ENCODE measurements at regions of chr17 and their contacts with region 1.

Region 1: DNA sequence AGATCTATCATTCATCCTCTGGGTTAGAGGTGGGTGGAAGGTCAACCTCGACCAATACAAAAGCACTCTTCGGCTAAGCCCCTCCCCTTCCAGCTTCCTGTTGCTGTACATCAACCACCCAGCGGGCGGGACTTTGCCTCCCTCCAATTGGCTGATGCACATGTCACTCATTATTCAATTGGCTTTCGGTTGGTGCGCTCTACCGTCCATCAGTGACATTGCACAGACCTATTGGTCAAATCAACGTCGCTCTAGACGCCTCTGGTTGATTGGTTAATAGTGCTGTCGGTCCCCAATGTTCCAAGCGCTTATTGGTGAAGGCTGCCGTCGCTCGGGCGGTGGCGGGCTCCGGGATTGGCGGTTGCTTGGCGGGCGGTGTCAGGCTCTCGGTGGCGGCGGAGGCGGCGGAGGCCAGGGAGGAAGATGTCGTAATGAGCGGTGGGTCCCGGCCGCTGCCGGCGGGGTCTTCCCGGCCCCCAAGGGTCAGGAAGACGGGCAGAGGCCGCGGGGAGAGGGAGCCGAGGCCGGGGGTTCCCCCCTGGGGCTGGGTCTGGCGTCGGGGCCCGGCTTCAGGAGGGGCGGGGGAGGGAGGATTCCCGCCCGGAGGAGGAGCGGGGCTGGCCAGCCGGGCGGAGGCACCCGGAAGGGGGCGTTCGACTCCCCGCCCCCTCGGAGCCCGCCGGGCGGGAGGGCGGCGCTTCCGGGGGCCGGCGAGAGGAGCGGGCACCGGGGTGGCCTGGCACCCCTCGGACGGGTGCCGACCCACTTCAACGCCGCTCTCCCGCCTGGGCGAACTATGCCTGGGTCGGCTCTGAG is at the start of gene SP2:
- DNase-seq: peak; percentile 100
- ATAC-seq: peak; percentile 90
- H3K4me3 ChIP-seq: peak within 1 kb of the TSS; percentile 78
- H3K27ac ChIP-seq: peak within 1 kb of the TSS; percentile 77
- H3K4me1 ChIP-seq: peaks cover 30% of the 10 kb centered on the region
- H3K27me3 ChIP-seq: no peaks in the 10 kb centered on the region
- CTCF ChIP-seq: no peak
- total RNA-seq, gene SP2: 3.9 and 6.5 TPM in 2 replicates

Region 2: DNA sequence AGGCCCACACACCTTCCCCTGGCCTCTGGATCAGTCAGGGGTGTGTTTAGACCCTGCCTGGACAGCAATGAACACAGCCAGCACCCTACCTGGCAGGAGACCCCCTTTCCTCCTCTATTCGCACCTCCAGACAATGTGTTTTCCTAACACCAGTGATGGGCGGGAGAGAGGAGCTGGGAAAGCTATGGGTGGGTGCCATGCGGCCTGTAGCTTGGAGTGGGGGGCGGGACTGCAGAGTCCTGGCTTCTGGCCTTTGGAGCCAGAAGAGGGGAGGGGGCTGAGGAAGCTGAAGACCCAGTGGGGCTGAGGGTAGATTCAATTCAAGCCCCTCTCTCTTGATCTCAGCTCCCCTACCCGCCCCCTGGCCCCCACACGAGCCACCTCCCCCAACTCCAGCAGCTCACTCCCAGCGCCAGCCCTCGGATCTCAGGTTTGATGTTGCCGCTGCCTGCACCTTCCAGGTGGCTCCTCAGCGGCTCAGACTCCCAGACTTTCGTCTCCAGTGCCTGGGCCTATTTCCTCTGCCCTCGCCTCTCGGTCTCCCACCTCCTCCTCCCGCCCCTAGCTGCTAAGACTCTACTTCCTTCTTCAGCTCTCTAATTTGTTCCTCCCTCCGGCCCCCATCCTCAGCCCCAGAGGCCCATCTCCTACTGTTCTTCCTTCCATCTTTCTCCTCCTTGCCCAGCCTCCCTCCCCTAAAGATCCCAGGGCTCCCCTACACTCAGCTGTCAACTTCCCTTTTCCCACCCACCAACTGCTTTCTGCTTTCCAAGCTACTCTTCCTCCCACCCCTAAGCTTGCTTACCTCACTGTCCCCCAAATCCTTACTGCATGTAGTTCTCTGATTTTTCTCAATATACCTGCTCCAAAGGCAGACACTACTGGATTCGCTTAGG is 38.3 kb before region 1 on chr17:
- CTCF ChIA-PET with region 1: no interaction called
- POLR2A ChIA-PET with region 1: no interaction called
- intact Hi-C with region 1: no loop called
- DNase-seq: no peak
- ATAC-seq: no peak
- H3K4me3 ChIP-seq: no peak overlapping the region
- H3K27ac ChIP-seq: no peak overlapping the region
- H3K4me1 ChIP-seq: peaks cover 6% of the 10 kb centered on the region
- H3K27me3 ChIP-seq: peaks cover 13% of the 10 kb centered on the region
- CTCF ChIP-seq: no peak

Region 3: GRCh38 chr17:47941236-47941994 is 45.4 kb after region 1 on chr17 and contains the start of gene PNPO:
- CTCF ChIA-PET with region 1: interaction called, 10 read pairs
- POLR2A ChIA-PET with region 1: interaction called, 11 read pairs
- intact Hi-C with region 1: loop called (anchors 2 kb)
- DNase-seq: peak; percentile 100
- ATAC-seq: peak; percentile 98
- H3K4me3 ChIP-seq: peak within 1 kb of the TSS; percentile 77
- H3K27ac ChIP-seq: peak within 1 kb of the TSS; percentile 24; the same call in 1 of the 2 replicates
- H3K4me1 ChIP-seq: peaks cover 24% of the 10 kb centered on the region
- H3K27me3 ChIP-seq: no peaks in the 10 kb centered on the region
- CTCF ChIP-seq: no peak; the same call in 1 of the 2 replicates
- total RNA-seq, gene PNPO: 49.8 and 57.5 TPM in 2 replicates

Region 4: DNA sequence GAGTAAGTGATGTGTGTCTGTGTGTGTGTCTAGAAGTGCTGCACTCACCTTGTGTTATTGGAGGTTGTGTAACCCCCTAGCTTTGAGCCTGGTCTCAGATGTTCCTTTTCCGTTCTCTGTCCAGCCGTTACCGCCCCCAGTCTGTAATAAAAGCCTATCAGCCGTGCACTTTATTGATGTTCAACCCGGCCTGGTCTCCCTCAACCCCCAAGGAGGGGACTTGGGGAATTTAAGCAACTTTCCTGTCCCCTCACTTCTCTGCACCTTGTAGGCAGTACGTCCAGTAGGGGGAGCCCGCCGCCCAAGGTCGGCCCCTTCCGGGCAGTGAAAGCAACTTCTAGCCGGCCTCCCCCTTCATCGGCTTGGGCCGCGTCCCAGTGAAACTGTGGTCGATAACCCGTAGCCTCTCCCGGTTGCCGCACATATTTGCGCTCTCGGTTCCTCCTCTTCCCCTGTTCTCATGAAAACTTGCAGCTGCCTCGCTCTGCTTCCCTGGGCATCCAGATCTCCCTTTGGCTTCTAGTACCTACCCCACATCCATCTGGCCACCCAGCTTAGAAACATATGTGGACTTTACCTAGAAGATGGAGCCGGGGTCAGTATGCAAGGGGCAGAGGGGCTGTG is 53.2 kb after region 1 on chr17:
- CTCF ChIA-PET with region 1: interaction called, 10 read pairs
- POLR2A ChIA-PET with region 1: interaction called, 3 read pairs
- intact Hi-C with region 1: loop called (anchors 1 kb)
- DNase-seq: peak; percentile 94
- ATAC-seq: peak; percentile 69
- H3K4me3 ChIP-seq: peak overlapping the region; percentile 49
- H3K27ac ChIP-seq: peak overlapping the region; percentile 96
- H3K4me1 ChIP-seq: peaks cover 34% of the 10 kb centered on the region
- H3K27me3 ChIP-seq: no peaks in the 10 kb centered on the region
- CTCF ChIP-seq: peak; percentile 99